ENCODE measurements at regions of chr11 and their contacts with region 1.

Region 1: GRCh38 chr11:62108017-62108750 is 15.6 kb upstream of the INCENP start:
- DNase-seq: peak; percentile 49 to 74
- ATAC-seq: peak; percentile 73 to 82; a peak in 4 of 6 replicates
- H3K4me3 ChIP-seq: no peak overlapping the region
- H3K27ac ChIP-seq: peak overlapping the region in 1 of 2 experiments; percentile 29; a peak in 2 of 6 replicates
- H3K4me1 ChIP-seq: peaks cover 13% of the 10 kb centered on the region; the same call in 1 of the 3 replicates
- CTCF ChIP-seq: peak; percentile 93
- EP300 ChIP-seq: no peak
- POLR2A ChIP-seq: no peak
- RAD21 ChIP-seq: peak; percentile 91 to 96

Region 2: GRCh38 chr11:61803889-61804647 is 304.1 kb before region 1 on chr11:
- CTCF ChIA-PET with region 1: interaction called, 121 read pairs
- POLR2A ChIA-PET with region 1: no interaction called
- DNase-seq: no peak
- ATAC-seq: no peak
- H3K4me3 ChIP-seq: no peak overlapping the region
- H3K27ac ChIP-seq: no peak overlapping the region
- H3K4me1 ChIP-seq: peaks cover 32% of the 10 kb centered on the region
- CTCF ChIP-seq: no peak
- EP300 ChIP-seq: no peak
- POLR2A ChIP-seq: no peak
- RAD21 ChIP-seq: no peak

Region 3: DNA sequence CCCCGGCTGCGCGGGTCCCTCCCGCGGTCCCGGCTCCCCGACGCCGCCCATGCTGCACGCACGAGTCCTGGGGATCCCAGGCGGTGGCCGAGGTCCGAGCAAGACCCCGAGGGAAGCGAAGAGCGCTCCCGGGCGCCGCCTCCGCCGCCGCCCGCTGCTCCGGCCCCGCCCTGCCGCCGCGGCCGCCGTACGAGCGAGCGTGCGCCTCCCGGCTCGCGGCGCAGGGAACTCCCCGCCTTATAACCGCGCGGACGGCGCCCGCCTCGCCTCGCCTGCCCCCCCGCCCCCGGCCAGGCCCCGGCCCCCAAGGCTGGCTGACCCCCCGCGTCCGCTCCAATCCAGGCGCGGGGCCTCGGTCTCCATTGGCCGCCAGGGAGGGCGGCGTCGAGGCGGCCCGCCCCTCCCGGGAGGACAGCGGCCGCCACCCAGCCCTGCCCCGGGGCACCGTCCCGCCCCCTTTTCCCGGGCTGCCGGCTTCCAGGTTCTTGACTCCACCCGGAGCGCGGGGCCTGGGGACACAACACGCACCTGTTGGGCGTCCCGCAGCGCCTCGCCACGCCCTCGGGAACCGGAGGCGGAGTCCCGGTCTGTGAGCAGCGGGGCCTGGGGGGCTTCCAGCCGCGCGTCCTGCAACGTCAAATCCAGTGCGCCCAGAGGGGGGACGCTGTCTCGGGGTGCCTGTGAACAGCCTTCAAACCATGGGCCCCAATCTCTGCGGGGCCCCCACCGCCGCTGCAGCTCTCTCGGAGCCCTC is 216.7 kb before region 1 on chr11 and contains the start of gene FADS3:
- CTCF ChIA-PET with region 1: interaction called, 215 read pairs
- POLR2A ChIA-PET with region 1: no interaction called
- DNase-seq: peak; percentile 74 to 76
- ATAC-seq: peak; percentile 79 to 87
- H3K4me3 ChIP-seq: peak within 1 kb of the TSS; percentile 73
- H3K27ac ChIP-seq: peak within 1 kb of the TSS; percentile 82 to 91
- H3K4me1 ChIP-seq: peaks cover 39% of the 10 kb centered on the region
- CTCF ChIP-seq: no peak; the same call in 2 of the 3 replicates
- EP300 ChIP-seq: no peak
- POLR2A ChIP-seq: peak; percentile 65
- RAD21 ChIP-seq: no peak
- polyA plus RNA-seq, gene FADS3: 17.5 and 22.3 TPM in 2 replicates

Region 4: GRCh38 chr11:61947486-61948210 is 160.5 kb before region 1 on chr11:
- CTCF ChIA-PET with region 1: interaction called, 50 read pairs
- POLR2A ChIA-PET with region 1: no interaction called
- DNase-seq: peak; percentile 82 to 89
- ATAC-seq: peak; percentile 83 to 91
- H3K4me3 ChIP-seq: no peak overlapping the region
- H3K27ac ChIP-seq: peak overlapping the region; percentile 71 to 72
- H3K4me1 ChIP-seq: peaks cover 35% of the 10 kb centered on the region
- CTCF ChIP-seq: peak; percentile 97
- EP300 ChIP-seq: no peak
- POLR2A ChIP-seq: no peak
- RAD21 ChIP-seq: peak; percentile 98 to 99

Region 5: DNA sequence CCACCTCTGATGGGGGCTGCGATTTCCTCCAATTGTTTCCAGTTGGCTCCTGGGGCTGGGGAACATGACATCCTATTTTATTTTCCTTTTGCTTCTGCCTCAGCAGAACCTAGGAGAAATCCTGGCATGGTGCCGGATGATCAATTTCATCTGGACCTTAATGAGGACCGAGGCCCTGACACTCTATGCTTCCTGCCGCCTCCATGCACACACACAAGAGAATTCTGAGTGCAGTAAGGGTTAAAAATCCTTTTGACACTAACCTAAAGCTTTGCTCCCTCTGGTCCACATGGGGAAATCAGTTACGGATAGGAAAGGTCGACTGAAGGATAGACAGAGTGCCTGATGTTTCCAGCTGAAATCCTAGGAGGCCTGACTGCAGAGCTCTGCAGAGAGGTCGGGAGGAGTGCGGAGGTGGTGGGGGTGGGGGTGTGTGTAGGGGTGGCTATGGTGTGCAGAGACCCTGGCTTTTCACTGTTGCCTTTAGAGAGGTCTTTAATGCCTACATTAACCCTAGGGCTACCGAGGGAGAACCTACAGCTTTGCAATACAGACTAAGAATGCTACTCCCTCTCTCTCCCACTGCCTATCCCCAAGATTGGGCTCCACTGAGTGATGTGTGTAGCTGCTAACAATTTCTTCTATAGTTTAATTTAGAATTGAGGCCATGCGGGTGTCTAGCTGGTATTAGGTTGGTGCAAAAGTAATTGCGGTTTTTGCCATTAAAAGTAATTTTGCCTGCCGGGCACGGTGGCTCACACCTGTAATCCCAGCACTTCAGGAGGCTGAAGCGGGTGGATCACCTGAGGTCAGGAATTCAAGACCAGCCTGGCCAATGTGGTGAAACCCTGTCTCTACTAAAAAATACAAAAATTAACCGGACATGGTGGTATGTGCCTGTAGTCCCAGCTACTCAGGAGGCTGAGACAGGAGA is 37.9 kb before region 1 on chr11:
- CTCF ChIA-PET with region 1: interaction called, 24 read pairs
- POLR2A ChIA-PET with region 1: no interaction called
- DNase-seq: no peak
- ATAC-seq: peak; percentile 34 to 40; a peak in 2 of 6 replicates
- H3K4me3 ChIP-seq: no peak overlapping the region
- H3K27ac ChIP-seq: no peak overlapping the region
- H3K4me1 ChIP-seq: no peaks in the 10 kb centered on the region
- CTCF ChIP-seq: no peak
- EP300 ChIP-seq: no peak
- POLR2A ChIP-seq: no peak
- RAD21 ChIP-seq: no peak

Region 6: DNA sequence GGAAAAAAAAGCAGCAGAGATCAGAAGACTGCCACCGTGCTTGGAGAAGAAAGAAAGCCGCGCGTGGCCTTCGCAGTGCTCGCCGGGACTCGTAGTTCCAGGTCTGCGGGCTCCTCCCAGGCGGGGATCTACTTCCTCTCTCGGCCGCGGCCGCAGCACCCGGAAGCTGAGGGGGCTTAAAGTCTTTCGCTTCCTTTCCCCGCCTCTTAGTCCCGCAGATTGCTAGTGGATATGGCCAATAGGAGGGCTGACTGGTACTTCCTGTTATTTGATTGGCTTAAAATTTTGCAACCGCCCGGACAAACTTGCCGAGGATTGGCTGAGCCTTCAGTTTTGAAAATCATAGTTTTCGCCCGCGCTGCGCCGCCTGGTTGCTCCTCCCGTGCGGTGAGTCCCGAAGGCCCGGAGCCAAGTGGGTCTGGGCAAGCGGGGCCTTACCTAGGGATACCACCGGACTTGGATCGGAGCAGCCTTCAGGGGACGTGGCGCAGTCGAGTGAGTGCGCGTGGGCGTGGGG is 15.5 kb after region 1 on chr11 and contains the start of gene INCENP:
- CTCF ChIA-PET with region 1: interaction called, 27 read pairs
- POLR2A ChIA-PET with region 1: interaction called, 8 read pairs
- DNase-seq: peak; percentile 98
- ATAC-seq: peak; percentile 98 to 99
- H3K4me3 ChIP-seq: peak within 1 kb of the TSS; percentile 81
- H3K27ac ChIP-seq: peak within 1 kb of the TSS; percentile 80 to 90
- H3K4me1 ChIP-seq: peaks cover 15% of the 10 kb centered on the region
- CTCF ChIP-seq: no peak
- EP300 ChIP-seq: no peak
- POLR2A ChIP-seq: no peak
- RAD21 ChIP-seq: no peak
- polyA plus RNA-seq, gene INCENP: 29.5 and 35.8 TPM in 2 replicates

Region 7: GRCh38 chr11:62137276-62137861 is 29.2 kb after region 1 on chr11:
- CTCF ChIA-PET with region 1: no interaction called
- POLR2A ChIA-PET with region 1: no interaction called
- DNase-seq: no peak
- ATAC-seq: no peak
- H3K4me3 ChIP-seq: no peak overlapping the region
- H3K27ac ChIP-seq: no peak overlapping the region
- H3K4me1 ChIP-seq: peaks cover 3% of the 10 kb centered on the region; the same call in 1 of the 3 replicates
- CTCF ChIP-seq: no peak
- EP300 ChIP-seq: no peak
- POLR2A ChIP-seq: no peak
- RAD21 ChIP-seq: no peak

Region 8: DNA sequence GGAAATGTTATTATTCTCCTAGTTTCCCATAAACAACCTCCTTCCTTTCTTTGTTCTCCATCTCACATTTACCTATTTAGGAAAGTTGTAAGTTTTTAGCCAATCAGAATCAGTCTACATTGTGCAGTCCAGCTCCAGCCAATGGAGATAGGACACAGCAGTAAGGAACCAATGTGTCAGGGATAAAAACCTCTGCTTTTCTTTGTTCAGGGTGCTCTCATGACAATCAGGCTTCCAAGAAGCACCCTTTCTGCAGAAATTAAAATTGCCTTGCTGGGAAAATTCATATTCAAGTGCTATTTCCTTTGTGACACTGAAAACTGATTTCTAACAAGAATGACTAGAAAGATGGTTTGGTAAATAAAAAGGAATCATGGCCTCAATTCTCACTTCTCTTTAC is 114.9 kb after region 1 on chr11:
- CTCF ChIA-PET with region 1: no interaction called
- POLR2A ChIA-PET with region 1: no interaction called
- DNase-seq: peak in 1 of 2 experiments; percentile 21
- ATAC-seq: no peak
- H3K4me3 ChIP-seq: no peak overlapping the region
- H3K27ac ChIP-seq: no peak overlapping the region
- H3K4me1 ChIP-seq: no peaks in the 10 kb centered on the region
- CTCF ChIP-seq: no peak
- EP300 ChIP-seq: no peak
- POLR2A ChIP-seq: no peak
- RAD21 ChIP-seq: no peak